ENCODE measurements at regions of chr6 and their contacts with region 1.

Region 1: DNA sequence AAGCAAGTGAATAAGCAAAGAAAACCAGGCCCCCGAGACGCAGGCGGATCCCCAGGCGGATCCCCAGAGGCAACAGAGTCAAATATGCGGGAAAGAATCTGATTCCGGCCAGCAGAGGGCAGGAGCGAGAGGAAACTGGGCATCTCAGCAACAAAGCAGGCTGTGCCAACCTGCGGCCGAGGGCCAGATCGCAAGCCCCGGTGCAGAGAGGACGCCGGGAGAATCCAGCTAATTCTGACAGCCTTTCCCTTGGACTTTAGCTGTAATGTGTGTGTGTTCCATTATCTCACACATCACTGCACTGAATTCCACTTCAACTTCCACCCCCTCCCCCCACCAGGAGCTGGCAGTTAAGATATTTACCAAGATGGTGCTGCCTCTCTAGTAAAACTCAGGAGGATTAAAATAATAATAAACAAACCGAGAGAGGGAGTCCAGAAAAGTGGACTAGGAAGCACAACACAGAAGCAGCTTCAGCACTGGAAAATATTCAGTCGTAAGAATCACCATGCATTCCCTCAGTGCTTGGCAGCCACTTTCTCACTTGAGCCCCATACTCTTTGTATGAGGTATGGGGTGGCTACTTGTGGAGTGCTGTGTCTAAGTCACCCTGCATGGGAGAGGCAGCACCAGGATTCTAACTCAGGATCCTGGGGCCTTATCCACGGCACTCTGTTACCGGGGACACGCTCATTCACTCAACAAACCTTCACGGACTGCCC is 66.2 kb upstream of the SNX9 start:
- DNase-seq: peak; percentile 57
- H3K4me3 ChIP-seq: peak overlapping the region; percentile 18
- H3K27ac ChIP-seq: no peak overlapping the region
- H3K27me3 ChIP-seq: no peaks in the 10 kb centered on the region
- CTCF ChIP-seq: peak; percentile 85

Region 2: GRCh38 chr6:157314705-157315321 is 442.1 kb before region 1 on chr6:
- CTCF ChIA-PET with region 1: interaction called, 38 read pairs
- POLR2A ChIA-PET with region 1: no interaction called
- DNase-seq: peak; percentile 64
- H3K4me3 ChIP-seq: no peak overlapping the region
- H3K27ac ChIP-seq: no peak overlapping the region
- H3K27me3 ChIP-seq: no peaks in the 10 kb centered on the region
- CTCF ChIP-seq: peak; percentile 95

Region 3: GRCh38 chr6:157741948-157742556 is 14.8 kb before region 1 on chr6:
- CTCF ChIA-PET with region 1: interaction called, 50 read pairs
- POLR2A ChIA-PET with region 1: no interaction called
- DNase-seq: no peak
- H3K4me3 ChIP-seq: no peak overlapping the region
- H3K27ac ChIP-seq: peak overlapping the region; percentile 3
- H3K27me3 ChIP-seq: no peaks in the 10 kb centered on the region
- CTCF ChIP-seq: no peak

Region 4: GRCh38 chr6:157800420-157801237 is 43.8 kb after region 1 on chr6:
- CTCF ChIA-PET with region 1: interaction called, 10 read pairs
- POLR2A ChIA-PET with region 1: no interaction called
- DNase-seq: peak; percentile 41
- H3K4me3 ChIP-seq: no peak overlapping the region
- H3K27ac ChIP-seq: no peak overlapping the region
- H3K27me3 ChIP-seq: no peaks in the 10 kb centered on the region
- CTCF ChIP-seq: no peak

Region 5: DNA sequence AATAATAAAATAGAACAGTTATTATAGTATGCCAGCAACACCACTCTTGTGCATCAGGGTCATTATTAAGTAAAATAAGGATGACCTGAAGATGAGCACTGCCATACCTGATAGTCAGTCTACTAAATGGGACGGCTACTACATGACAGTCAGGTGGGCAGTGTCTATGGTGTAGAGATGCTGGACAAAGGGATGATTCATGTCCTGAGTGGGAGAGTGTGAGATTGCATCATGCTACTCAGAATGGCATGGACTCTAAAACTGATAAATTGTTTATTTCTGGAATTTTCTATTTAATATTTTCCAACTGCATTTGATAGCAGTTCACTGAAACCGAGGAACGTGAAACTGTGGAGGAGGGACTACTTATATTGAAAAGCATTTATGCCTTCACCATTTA is 104.9 kb after region 1 on chr6:
- CTCF ChIA-PET with region 1: interaction called, 13 read pairs
- POLR2A ChIA-PET with region 1: no interaction called
- DNase-seq: no peak
- H3K4me3 ChIP-seq: no peak overlapping the region
- H3K27ac ChIP-seq: no peak overlapping the region
- H3K27me3 ChIP-seq: no peaks in the 10 kb centered on the region
- CTCF ChIP-seq: no peak

Region 6: GRCh38 chr6:157893238-157893637 is 136.4 kb after region 1 on chr6:
- CTCF ChIA-PET with region 1: interaction called, 20 read pairs
- POLR2A ChIA-PET with region 1: no interaction called
- DNase-seq: no peak
- H3K4me3 ChIP-seq: no peak overlapping the region
- H3K27ac ChIP-seq: peak overlapping the region; percentile 11
- H3K27me3 ChIP-seq: no peaks in the 10 kb centered on the region
- CTCF ChIP-seq: no peak